Tibial artery (tissue), 4 donors: ENCODE measurements at regions of chr1 and their contacts with region 1.

Region 1: DNA sequence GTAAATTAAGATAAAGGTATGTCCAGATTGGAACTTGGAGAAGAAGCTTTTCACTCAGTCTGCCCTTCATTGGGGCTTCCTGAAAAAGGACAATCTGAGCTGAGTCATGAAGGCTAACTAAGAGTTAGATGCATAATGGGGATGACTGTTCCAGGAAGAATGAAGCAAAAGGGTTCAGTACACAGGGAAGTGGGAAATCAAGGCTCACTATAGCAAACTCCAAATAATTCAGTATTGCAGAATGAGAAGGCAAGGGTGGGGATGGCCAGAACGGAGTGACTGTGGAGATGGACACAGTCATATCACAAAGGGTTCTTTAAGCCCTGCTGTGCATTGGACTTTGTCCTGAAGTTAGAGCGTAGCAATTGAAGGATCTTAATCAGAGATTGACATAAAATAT is 158.3 kb downstream of the FGGY start:
- DNase-seq: no peak
- H3K4me3 ChIP-seq: no peak overlapping the region
- H3K27ac ChIP-seq: no peak overlapping the region
- H3K4me1 ChIP-seq: no peaks in the 10 kb centered on the region
- H3K27me3 ChIP-seq: no peaks in the 10 kb centered on the region
- CTCF ChIP-seq: no peak

Region 2: GRCh38 chr1:58883037-58883887 is 571.9 kb before region 1 on chr1:
- intact Hi-C with region 1: no loop called
- DNase-seq: peak; percentile 87 to 90
- H3K4me3 ChIP-seq: no peak overlapping the region
- H3K27ac ChIP-seq: peak overlapping the region in 1 of 2 donors; percentile 84
- H3K4me1 ChIP-seq: peaks cover 0 to 50% (median 38%) of the 10 kb centered on the region in 4 donors
- H3K27me3 ChIP-seq: no peaks in the 10 kb centered on the region
- CTCF ChIP-seq: no peak

Region 3: GRCh38 chr1:59520827-59521418 is 65.7 kb after region 1 on chr1:
- intact Hi-C with region 1: loop called (anchors 10 kb)
- DNase-seq: peak; percentile 35 to 82
- H3K4me3 ChIP-seq: no peak overlapping the region
- H3K27ac ChIP-seq: peak overlapping the region; percentile 73 to 78
- H3K4me1 ChIP-seq: peaks cover 3 to 32% (median 18%) of the 10 kb centered on the region in 4 donors
- H3K27me3 ChIP-seq: no peaks in the 10 kb centered on the region
- CTCF ChIP-seq: no peak

Region 4: DNA sequence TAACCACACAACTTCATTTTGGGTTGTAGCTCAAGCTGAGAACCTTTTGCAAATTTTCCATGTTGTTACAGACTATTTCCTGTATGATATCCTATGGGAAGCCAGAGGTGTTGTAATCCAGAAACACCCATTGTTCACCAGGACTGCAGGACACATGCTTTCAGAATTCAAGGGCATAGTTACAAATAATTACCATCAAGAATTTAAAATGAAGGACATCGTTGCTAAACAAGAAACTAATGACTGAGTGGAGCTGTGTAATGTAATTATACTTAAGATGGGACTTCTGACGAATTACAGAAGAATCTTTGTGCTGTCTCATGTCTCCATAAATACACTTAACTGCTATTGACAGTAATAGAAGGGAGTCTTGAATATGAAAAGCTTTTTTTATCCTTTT is 311.9 kb after region 1 on chr1:
- intact Hi-C with region 1: no loop called
- DNase-seq: no peak
- H3K4me3 ChIP-seq: no peak overlapping the region
- H3K27ac ChIP-seq: no peak overlapping the region
- H3K4me1 ChIP-seq: no peaks in the 10 kb centered on the region
- H3K27me3 ChIP-seq: no peaks in the 10 kb centered on the region
- CTCF ChIP-seq: no peak